PC-3 (cell line): ENCODE measurements at regions of chrX and their contacts with region 1.

Region 1: GRCh38 chrX:70554081-70554480 is 109.4 kb downstream of the DLG3 start:
- DNase-seq: peak; percentile 59
- ATAC-seq: peak; percentile 63
- H3K4me3 ChIP-seq: no peak overlapping the region
- H3K27ac ChIP-seq: no peak overlapping the region
- H3K4me1 ChIP-seq: no peaks in the 10 kb centered on the region; the same call in 1 of the 2 replicates
- H3K27me3 ChIP-seq: no peaks in the 10 kb centered on the region
- CTCF ChIP-seq: peak; percentile 59

Region 2: GRCh38 chrX:70336767-70337166 is 217.3 kb before region 1 on chrX:
- CTCF ChIA-PET with region 1: no interaction called
- POLR2A ChIA-PET with region 1: no interaction called
- intact Hi-C with region 1: loop called (anchors 10 kb)
- DNase-seq: no peak
- ATAC-seq: no peak
- H3K4me3 ChIP-seq: no peak overlapping the region
- H3K27ac ChIP-seq: no peak overlapping the region
- H3K4me1 ChIP-seq: 0 out of 2 replicates have a peak, but pooled peaks cover 8% of the 10 kb centered on the region
- H3K27me3 ChIP-seq: no peaks in the 10 kb centered on the region
- CTCF ChIP-seq: no peak

Region 3: DNA sequence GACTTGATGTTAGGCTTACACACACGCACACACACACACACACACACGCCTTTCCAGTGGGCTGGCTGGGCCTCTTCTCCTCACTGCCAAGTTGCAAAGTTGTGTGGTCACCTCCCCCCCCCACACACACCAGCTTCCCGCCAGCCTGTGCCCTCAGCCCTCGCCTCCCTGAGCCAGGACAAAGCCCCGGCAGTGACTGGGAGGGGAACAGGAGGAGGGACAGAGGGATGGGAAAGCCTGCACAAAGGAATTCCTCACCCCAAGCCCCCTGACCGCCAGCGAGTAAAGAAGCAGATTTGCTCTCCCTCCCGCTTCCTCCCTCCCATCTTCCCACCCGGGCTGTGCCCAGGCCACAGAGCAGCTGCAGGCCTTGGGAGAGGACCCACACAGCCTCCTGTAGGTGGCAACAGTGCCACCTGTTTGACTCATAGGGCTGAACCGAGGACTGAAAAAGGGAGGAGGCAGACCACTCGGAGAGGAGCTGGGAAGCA is 131.2 kb before region 1 on chrX and contains the start of gene GDPD2:
- CTCF ChIA-PET with region 1: interaction called, 6 read pairs
- POLR2A ChIA-PET with region 1: no interaction called
- intact Hi-C with region 1: loop called (anchors 1 kb)
- DNase-seq: peak; percentile 54
- ATAC-seq: peak; percentile 94
- H3K4me3 ChIP-seq: no peak within 1 kb of the TSS
- H3K27ac ChIP-seq: no peak within 1 kb of the TSS
- H3K4me1 ChIP-seq: no peaks in the 10 kb centered on the region
- H3K27me3 ChIP-seq: no peaks in the 10 kb centered on the region
- CTCF ChIP-seq: peak; percentile 63
- total RNA-seq, gene GDPD2: 0.04 TPM in 1 of 2 replicates, not detected in the other

Region 4: DNA sequence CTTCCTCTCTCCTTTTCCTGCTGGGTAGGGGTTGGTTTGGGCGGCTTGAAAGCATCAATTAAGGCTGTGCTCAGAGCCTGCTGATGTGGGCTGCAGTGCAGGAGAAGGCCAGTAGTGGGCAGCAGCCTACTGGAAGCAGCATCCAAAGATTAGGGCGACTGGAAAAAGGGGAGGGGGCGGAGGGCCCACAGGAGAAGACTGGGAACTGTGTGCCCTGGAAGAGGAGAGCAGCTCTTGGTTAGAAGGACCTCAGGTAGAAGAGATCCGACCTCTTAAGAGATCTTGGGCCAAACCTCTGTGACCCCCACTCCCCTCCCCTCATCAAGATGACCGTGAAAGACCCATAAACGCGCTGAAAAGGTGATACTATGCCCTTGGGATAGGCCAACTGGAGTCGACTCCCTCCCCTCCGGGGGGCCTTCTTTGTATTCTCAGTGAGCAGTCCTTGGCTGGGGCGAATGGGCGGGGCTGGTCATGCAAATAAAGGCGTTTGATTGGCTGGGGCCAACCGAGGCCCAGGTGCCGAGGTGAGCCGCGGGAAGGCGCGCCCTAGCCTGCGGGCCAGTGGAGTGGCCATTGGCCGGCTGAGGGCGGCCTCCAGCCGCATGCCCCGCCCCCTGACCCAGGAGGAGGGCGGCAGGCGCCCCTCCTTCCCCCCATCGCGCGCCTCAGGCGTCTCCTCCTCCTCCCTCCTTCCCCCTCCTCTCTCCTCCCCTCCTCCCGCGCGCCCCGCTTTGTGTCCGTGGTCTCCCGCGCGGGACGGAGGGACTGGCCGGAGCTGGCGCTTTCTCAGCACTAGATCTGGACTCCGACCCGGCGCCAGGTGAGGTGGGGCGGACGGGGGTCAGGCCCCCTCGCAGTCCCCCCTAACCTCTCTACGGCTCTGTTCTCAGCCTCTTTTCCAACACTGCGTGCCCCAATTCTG is 99.4 kb before region 1 on chrX:
- CTCF ChIA-PET with region 1: interaction called, 6 read pairs
- POLR2A ChIA-PET with region 1: no interaction called
- intact Hi-C with region 1: loop called (anchors 1 kb)
- DNase-seq: peak; percentile 93
- ATAC-seq: peak; percentile 76
- H3K4me3 ChIP-seq: peak overlapping the region; percentile 98
- H3K27ac ChIP-seq: peak overlapping the region; percentile 89
- H3K4me1 ChIP-seq: peaks cover 33% of the 10 kb centered on the region
- H3K27me3 ChIP-seq: no peaks in the 10 kb centered on the region
- CTCF ChIP-seq: peak; percentile 94

Region 5: GRCh38 chrX:70476934-70477733 is 76.9 kb before region 1 on chrX:
- CTCF ChIA-PET with region 1: interaction called, 7 read pairs
- POLR2A ChIA-PET with region 1: interaction called, 7 read pairs
- intact Hi-C with region 1: loop called (anchors 1 kb)
- DNase-seq: peak; percentile 79
- ATAC-seq: peak; percentile 68
- H3K4me3 ChIP-seq: peak overlapping the region; percentile 43
- H3K27ac ChIP-seq: peak overlapping the region; percentile 99
- H3K4me1 ChIP-seq: peaks cover 60% of the 10 kb centered on the region
- H3K27me3 ChIP-seq: no peaks in the 10 kb centered on the region
- CTCF ChIP-seq: no peak

Region 6: DNA sequence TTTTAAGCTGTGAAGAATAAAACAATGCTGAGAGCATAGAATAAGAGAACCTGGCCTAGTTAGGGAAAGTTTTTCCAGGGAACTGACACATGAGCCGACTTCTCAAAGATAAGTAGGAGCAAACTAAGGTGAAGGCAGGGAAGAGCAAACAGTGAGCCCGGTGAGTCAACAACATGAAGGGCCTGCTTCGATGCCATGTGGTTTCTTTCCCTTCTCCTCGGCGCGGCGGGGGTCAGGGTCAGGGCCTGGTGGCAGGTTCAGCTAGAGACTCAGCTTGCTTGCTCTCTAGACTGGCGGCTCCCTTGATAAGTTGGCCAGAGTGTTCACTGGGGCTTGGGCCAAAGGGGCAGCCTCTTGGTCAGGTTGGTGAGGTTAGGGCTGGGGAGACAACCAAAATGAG is 28.3 kb before region 1 on chrX:
- CTCF ChIA-PET with region 1: no interaction called
- POLR2A ChIA-PET with region 1: no interaction called
- intact Hi-C with region 1: loop called (anchors 2 kb)
- DNase-seq: peak; percentile 72
- ATAC-seq: peak; percentile 93
- H3K4me3 ChIP-seq: no peak overlapping the region
- H3K27ac ChIP-seq: peak overlapping the region; percentile 47
- H3K4me1 ChIP-seq: peaks cover 8% of the 10 kb centered on the region
- H3K27me3 ChIP-seq: no peaks in the 10 kb centered on the region
- CTCF ChIP-seq: no peak

Region 7: DNA sequence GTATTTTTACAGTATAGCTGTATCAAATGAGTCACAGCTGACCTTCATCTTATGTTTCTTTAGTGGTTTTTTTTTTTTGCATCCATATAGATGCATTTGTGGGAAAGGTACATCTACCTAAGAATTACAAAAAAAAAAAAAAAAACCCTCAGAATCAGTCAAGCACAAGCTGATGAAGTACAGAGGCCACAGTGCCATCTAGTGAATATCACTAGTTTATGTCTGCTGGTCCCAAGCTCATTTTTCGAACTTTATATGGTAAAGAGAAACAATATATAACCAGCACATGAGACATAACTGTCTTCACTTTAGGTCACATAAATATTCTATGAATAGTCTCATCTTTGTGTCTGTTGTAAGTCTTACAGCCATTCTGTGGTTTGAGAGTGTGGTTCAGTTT is 110.6 kb after region 1 on chrX:
- CTCF ChIA-PET with region 1: interaction called, 7 read pairs
- POLR2A ChIA-PET with region 1: no interaction called
- intact Hi-C with region 1: loop called (anchors 1 kb)
- DNase-seq: peak; percentile 49
- ATAC-seq: peak; percentile 50
- H3K4me3 ChIP-seq: no peak overlapping the region
- H3K27ac ChIP-seq: no peak overlapping the region
- H3K4me1 ChIP-seq: no peaks in the 10 kb centered on the region
- H3K27me3 ChIP-seq: peaks cover 16% of the 10 kb centered on the region
- CTCF ChIP-seq: peak; percentile 58; the same call in 1 of the 2 replicates